ENCODE measurements at regions of chr1 and their contacts with region 1.

Region 1: GRCh38 chr1:212110617-212111016 is 75.1 kb downstream of the DTL start:
- DNase-seq: peak in 3 of 5 donors; percentile 27 to 46 (median 32)
- ATAC-seq: peak in 3 of 4 donors; percentile 50 to 69 (median 56)
- H3K4me3 ChIP-seq: no peak overlapping the region
- H3K27ac ChIP-seq: no peak overlapping the region
- H3K4me1 ChIP-seq: peaks cover 0 to 49% (median 22%) of the 10 kb centered on the region in 12 donors
- H3K27me3 ChIP-seq: no peaks in the 10 kb centered on the region
- CTCF ChIP-seq: peak in 6 of 12 donors; percentile 19 to 46 (median 24)
- POLR2A ChIP-seq: no peak

Region 2: DNA sequence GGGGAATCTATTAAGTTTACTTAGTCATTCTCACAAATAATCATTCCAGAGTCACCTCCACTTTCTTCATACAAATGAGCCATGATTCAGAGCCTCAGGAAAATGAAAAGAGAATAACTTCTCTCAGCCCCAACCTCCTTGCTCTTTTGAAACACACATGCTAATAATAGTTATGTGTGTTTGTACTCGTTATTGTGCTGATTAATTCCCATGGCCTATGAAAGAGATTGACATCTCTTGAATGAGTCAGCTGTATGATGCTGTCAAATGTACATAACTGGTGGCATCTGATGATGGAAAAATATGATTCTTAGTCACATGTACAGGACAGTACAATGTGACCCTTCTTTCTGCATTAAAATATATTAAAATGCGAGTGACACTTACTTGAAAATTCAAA is 33.6 kb before region 1 on chr1:
- intact Hi-C with region 1: loop called in 1 of 10 experiments (anchors 5 kb)
- DNase-seq: no peak
- ATAC-seq: no peak
- H3K4me3 ChIP-seq: no peak overlapping the region
- H3K27ac ChIP-seq: peak overlapping the region in 1 of 12 donors; percentile 52
- H3K4me1 ChIP-seq: peaks cover 0 to 10% (median 0%) of the 10 kb centered on the region in 12 donors
- H3K27me3 ChIP-seq: no peaks in the 10 kb centered on the region
- CTCF ChIP-seq: no peak
- POLR2A ChIP-seq: no peak

Region 3: GRCh38 chr1:212089560-212090163 is 21.0 kb before region 1 on chr1:
- intact Hi-C with region 1: no loop called
- DNase-seq: no peak
- ATAC-seq: no peak
- H3K4me3 ChIP-seq: no peak overlapping the region
- H3K27ac ChIP-seq: peak overlapping the region in 5 of 12 donors; percentile 11 to 78 (median 21)
- H3K4me1 ChIP-seq: peaks cover 0 to 34% (median 10%) of the 10 kb centered on the region in 12 donors
- H3K27me3 ChIP-seq: no peaks in the 10 kb centered on the region
- CTCF ChIP-seq: no peak
- POLR2A ChIP-seq: no peak

Region 4: GRCh38 chr1:212179394-212180076 is 68.9 kb after region 1 on chr1:
- intact Hi-C with region 1: no loop called
- DNase-seq: no peak
- ATAC-seq: peak in 1 of 4 donors; percentile 22
- H3K4me3 ChIP-seq: no peak overlapping the region
- H3K27ac ChIP-seq: no peak overlapping the region
- H3K4me1 ChIP-seq: peaks cover 0 to 19% (median 2%) of the 10 kb centered on the region in 12 donors
- H3K27me3 ChIP-seq: no peaks in the 10 kb centered on the region
- CTCF ChIP-seq: no peak
- POLR2A ChIP-seq: no peak